Spleen (tissue), 13 donors: ENCODE measurements at regions of chr14 and their contacts with region 1.

Region 1: DNA sequence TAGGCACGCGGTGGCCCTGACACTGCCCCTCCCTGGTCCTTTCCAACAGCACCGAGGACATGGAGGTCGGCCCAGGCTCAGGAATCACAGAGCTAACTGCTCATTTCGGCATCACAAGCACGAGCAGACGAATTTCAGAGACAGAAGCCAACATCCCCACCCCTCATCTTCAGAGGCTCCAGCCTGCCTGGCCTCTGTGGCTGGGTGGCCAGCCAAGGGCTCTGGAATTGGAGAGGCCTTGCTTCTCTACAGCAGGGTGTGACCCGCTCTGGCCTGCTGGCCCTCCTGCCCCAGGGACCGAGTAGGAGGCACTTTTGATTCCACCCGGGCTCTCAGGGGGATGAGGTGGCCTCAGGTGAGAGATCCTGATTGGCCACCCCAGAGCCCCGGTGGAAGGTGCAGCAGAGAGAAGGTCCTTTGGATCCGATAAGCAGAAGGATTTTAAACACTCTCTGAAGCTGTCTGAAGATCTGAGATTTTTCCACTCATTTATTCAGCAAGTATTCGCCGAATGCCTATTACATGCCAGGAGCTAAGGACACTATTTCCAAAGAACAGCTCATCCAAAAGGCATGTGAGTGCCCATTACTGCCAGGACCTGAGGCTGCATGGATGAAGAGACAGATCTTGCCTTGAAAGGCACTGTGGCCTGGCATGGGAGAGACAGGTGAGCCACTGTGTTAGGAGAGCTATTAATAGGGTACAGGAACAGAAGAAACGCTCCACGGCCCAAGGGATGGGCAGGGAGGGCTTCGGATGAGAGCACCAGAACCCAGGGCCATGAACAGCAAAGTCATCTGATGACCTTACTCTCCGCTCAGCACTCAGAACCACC is 10.2 kb downstream of the BAG5 start:
- DNase-seq: no peak
- H3K4me3 ChIP-seq: no peak overlapping the region
- H3K27ac ChIP-seq: peak overlapping the region in 4 of 8 donors; percentile 10 to 61 (median 48)
- H3K4me1 ChIP-seq: peaks cover under 1 to 46% (median 25%) of the 10 kb centered on the region in 6 donors
- H3K27me3 ChIP-seq: no peaks in the 10 kb centered on the region
- CTCF ChIP-seq: no peak
- POLR2A ChIP-seq: no peak

Region 2: GRCh38 chr14:103518422-103519042 is 33.7 kb before region 1 on chr14:
- intact Hi-C with region 1: loop called (anchors 5 kb)
- DNase-seq: peak; percentile 91
- H3K4me3 ChIP-seq: no peak overlapping the region
- H3K27ac ChIP-seq: peak overlapping the region in 3 of 8 donors; percentile 5 to 33 (median 18)
- H3K4me1 ChIP-seq: peaks cover 28 to 63% (median 56%) of the 10 kb centered on the region in 6 donors
- H3K27me3 ChIP-seq: peaks cover 0 to 47% (median 24%) of the 10 kb centered on the region in 7 donors
- CTCF ChIP-seq: peak; percentile 73 to 92 (median 89)
- POLR2A ChIP-seq: no peak